GM10248 (cell line): ENCODE measurements at regions of chr15 and their contacts with region 1.

Region 1: GRCh38 chr15:65286704-65287519 is at the start of gene PARP16:
- DNase-seq: peak; percentile 92
- CTCF ChIP-seq: peak; percentile 60

Region 2: DNA sequence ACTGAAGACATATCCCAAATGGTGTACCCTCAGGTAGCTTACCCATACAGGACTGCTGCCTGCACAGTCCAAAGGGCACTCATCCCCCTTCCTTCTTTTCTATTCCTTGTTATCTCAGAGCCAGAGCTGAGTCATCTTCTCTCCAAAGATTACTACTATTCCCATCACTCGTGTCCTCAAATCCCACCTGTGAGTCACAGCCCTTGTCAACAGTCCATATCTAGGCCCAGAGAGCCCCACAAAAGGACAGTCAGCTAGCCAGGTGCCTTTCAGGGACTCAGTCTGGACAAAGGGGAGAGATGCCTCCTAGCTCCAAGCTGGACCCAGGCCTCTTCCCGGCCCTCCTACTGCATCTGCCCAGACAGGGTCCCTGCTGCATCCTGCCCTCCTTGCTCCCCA is 11.2 kb before region 1 on chr15:
- CTCF ChIA-PET with region 1: interaction called, 26 read pairs
- POLR2A ChIA-PET with region 1: no interaction called
- DNase-seq: no peak
- CTCF ChIP-seq: no peak

Region 3: GRCh38 chr15:65298731-65299130 is 11.8 kb after region 1 on chr15:
- CTCF ChIA-PET with region 1: interaction called, 16 read pairs
- POLR2A ChIA-PET with region 1: interaction called, 21 read pairs
- DNase-seq: no peak
- CTCF ChIP-seq: no peak

Region 4: GRCh38 chr15:65326117-65326526 is 39.2 kb after region 1 on chr15:
- CTCF ChIA-PET with region 1: no interaction called
- POLR2A ChIA-PET with region 1: no interaction called
- DNase-seq: no peak
- CTCF ChIP-seq: no peak

Region 5: GRCh38 chr15:65460741-65461347 is 173.9 kb after region 1 on chr15:
- CTCF ChIA-PET with region 1: no interaction called
- POLR2A ChIA-PET with region 1: no interaction called
- DNase-seq: no peak
- CTCF ChIP-seq: no peak